ENCODE measurements at regions of chr21 and their contacts with region 1.

Region 1: GRCh38 chr21:35503671-35504070 is 454.6 kb upstream of the RUNX1 start:
- DNase-seq: no peak
- H3K4me3 Mint-ChIP-seq: no peak overlapping the region
- H3K27ac Mint-ChIP-seq: peak overlapping the region; percentile 4
- H3K4me1 Mint-ChIP-seq: peaks cover 17% of the 10 kb centered on the region
- H3K27me3 Mint-ChIP-seq: peaks cover 16% of the 10 kb centered on the region

Region 2: DNA sequence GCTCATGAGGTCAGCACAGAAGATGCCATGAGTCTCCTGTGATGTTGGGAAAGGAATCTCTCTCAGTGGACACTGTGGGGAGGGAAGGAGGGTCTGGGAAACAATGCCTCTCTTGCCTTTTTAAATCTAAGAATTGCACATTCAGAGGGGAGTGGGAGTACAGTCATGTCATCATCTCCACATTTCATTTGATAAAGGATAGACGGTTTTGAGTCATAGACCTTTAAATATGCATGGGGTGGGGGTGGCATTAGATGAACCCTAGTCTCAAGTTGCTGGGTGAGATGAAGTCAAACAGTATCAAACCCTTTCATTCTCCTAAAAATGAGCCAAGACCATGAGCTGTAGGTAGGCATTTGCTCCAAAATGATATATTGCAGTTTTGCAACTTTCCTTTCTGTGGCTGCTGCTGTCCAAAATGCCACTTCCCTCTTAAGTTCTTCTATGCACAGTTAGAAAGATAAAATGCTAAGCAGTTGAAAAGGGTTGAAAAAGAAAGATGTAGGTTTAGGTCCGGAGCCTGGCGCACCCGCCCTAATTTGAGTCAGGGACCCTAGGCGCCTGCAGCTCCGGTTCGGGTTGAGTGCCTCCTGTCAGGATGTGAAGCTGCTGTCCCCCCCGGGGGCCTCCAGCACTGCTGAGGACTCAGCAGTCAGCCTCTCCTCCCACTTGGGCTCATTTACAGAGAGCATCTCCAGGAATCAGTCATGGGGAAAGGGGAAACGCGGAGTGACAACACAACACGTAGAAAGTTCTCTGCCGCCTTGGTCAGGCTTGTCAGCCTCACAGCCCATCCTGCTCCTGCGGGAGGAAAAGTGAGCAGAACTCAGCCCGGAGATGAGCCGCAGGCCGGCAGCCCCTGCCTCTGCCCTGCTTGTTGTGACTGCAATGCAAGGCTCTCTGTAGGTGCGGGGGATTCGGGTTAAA is 24.7 kb after region 1 on chr21:
- CTCF ChIA-PET with region 1: no interaction called
- POLR2A ChIA-PET with region 1: interaction called, 12 read pairs
- DNase-seq: peak; percentile 54
- H3K4me3 Mint-ChIP-seq: peak overlapping the region; percentile 76
- H3K27ac Mint-ChIP-seq: peak overlapping the region; percentile 84
- H3K4me1 Mint-ChIP-seq: peaks cover 41% of the 10 kb centered on the region
- H3K27me3 Mint-ChIP-seq: no peaks in the 10 kb centered on the region